Calu3 (cell line): ENCODE measurements at regions of chr3 and their contacts with region 1.

Region 1: GRCh38 chr3:62558549-62559112 is 185.3 kb upstream of the FEZF2 start:
- DNase-seq: peak; percentile 19
- H3K4me3 Mint-ChIP-seq: no peak overlapping the region
- H3K27ac Mint-ChIP-seq: no peak overlapping the region
- H3K4me1 Mint-ChIP-seq: no peaks in the 10 kb centered on the region
- H3K27me3 Mint-ChIP-seq: no peaks in the 10 kb centered on the region
- CTCF ChIP-seq: peak; percentile 33

Region 2: DNA sequence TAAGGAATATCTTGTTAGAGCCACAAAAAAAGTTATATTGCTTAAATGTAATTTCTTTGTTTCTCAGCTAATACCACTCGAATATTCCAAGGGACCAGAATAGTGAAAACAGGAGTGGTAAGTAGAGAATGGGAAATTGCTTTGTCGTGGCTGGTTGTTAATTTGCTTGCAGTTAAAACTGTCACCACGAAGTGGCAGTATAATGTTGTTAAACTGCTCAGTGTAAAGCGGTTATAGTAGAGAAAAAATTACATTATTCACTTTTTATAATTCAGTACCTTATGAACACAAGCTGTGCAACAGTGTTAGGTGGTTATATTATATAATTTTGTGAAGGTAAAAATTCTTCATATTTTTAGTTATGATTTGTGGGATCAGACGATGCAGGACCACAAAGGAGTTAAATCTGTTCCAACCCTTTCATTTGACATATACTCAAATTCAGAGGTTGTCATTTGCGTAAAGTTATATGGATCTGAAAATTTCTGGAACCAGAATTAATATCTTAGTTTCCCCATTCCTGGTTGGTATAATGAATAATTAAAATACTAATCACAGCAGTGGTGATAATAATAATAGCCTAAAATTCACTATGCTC is 357.1 kb before region 1 on chr3:
- CTCF ChIA-PET with region 1: no interaction called
- intact Hi-C with region 1: loop called (anchors 1 kb)
- DNase-seq: peak; percentile 18
- H3K4me3 Mint-ChIP-seq: no peak overlapping the region
- H3K27ac Mint-ChIP-seq: no peak overlapping the region
- H3K4me1 Mint-ChIP-seq: no peaks in the 10 kb centered on the region
- H3K27me3 Mint-ChIP-seq: no peaks in the 10 kb centered on the region
- CTCF ChIP-seq: peak; percentile 24

Region 3: DNA sequence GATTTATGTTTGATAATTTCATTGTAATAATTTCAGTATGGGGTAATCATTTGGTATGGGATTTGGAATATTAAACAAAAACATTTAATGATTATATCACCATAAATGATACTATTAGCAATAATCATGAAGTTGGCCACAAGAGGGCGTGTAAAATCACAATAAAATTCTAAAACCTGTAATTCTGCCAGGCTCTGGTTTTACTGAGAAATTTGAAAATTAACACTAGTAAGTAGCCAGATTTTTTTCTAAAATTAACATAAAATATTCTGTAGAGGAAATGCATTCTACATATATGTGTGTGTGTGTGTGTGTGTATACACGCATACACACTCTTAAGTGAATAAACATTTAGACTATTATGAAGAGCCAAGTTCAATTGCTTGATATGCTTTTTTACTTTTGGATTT is 225.8 kb before region 1 on chr3:
- CTCF ChIA-PET with region 1: interaction called, 4 read pairs
- intact Hi-C with region 1: loop called (anchors 1 kb)
- DNase-seq: peak; percentile 14
- H3K4me3 Mint-ChIP-seq: no peak overlapping the region
- H3K27ac Mint-ChIP-seq: no peak overlapping the region
- H3K4me1 Mint-ChIP-seq: no peaks in the 10 kb centered on the region
- H3K27me3 Mint-ChIP-seq: no peaks in the 10 kb centered on the region
- CTCF ChIP-seq: peak; percentile 12

Region 4: GRCh38 chr3:62481965-62482364 is 76.7 kb before region 1 on chr3:
- CTCF ChIA-PET with region 1: no interaction called
- intact Hi-C with region 1: no loop called
- DNase-seq: no peak
- H3K4me3 Mint-ChIP-seq: no peak overlapping the region
- H3K27ac Mint-ChIP-seq: no peak overlapping the region
- H3K4me1 Mint-ChIP-seq: no peaks in the 10 kb centered on the region
- H3K27me3 Mint-ChIP-seq: no peaks in the 10 kb centered on the region
- CTCF ChIP-seq: no peak

Region 5: DNA sequence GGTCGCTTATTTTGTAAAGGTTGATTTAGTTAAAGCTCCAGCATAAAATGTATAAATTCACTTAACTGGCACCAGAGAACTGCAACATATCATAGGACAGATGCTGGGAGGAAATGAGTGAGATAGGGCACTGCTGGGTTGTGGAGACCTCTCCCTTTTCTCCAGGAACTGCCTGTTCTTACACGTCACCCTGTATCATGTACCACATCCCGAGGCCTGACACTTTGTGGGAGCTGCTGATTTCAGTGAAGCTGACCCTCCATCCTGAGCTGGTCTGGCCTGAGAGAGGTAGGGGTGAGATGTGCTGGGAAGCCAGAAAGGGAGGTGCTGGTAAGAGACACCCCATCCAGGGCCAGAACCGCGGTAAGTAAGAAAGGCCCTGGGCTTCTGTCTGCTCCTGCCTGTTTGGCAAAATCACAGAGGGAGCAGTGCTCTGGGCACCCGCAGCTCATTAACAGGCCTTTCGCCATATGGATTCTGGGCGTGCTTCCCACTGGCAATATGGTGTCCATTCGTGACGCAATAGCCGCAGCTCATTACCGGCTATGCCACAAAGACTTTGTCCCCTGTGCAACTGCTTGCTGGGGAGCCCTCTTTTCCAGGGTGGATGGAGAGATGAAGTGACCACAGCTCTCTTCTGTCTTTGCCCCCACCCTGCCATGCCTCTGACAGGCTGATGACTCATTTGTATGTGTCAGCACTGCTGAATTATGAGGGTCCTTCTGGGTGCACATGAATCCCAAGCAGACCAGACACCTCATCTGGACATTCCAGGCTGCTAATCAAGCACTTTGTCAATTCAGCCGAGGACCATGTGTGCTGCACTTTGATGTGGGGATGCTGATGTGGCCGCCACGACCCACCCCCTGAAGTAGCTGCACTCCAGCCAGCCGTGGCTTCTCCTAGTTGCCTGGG is 28.8 kb after region 1 on chr3:
- CTCF ChIA-PET with region 1: no interaction called
- intact Hi-C with region 1: no loop called
- DNase-seq: no peak
- H3K4me3 Mint-ChIP-seq: no peak overlapping the region
- H3K27ac Mint-ChIP-seq: no peak overlapping the region
- H3K4me1 Mint-ChIP-seq: peaks cover 16% of the 10 kb centered on the region
- H3K27me3 Mint-ChIP-seq: no peaks in the 10 kb centered on the region
- CTCF ChIP-seq: no peak

Region 6: DNA sequence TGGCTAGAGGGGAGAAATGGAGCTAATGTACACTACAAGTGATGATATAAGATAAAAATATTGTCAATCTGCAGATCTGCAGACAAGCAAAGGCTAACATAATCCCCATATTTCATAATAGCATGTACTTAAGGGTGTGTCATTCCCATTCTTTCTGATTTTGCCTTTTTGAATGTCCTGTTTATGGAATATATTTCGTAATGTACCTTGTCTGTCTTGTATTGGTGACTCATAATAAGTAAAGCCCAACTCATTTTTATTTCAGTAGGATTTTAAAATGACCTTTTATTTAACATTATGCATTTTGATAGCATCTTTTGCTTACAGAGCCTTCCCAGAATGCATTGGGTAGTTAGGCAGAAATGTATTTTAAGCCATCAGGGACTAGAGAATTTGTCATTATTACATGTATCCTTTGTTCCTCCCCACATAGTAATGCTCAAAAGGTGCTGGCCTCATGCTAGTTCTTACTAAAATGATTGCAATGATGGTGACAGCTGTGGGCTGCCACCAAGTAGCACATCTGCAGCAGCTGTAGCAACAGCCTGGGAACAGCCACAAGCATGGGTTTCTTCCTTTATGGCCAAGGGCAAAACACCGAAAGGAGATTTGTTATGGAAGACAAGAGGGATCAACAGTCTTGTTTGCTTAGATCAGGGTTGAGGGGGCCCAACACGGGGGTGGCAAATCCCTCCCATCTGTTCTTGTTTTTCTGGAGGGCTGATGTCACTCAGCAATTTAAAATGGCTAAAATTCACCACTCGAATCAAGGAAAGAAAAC is 128.1 kb after region 1 on chr3:
- CTCF ChIA-PET with region 1: no interaction called
- intact Hi-C with region 1: no loop called
- DNase-seq: no peak
- H3K4me3 Mint-ChIP-seq: no peak overlapping the region
- H3K27ac Mint-ChIP-seq: no peak overlapping the region
- H3K4me1 Mint-ChIP-seq: no peaks in the 10 kb centered on the region
- H3K27me3 Mint-ChIP-seq: peaks cover 37% of the 10 kb centered on the region
- CTCF ChIP-seq: no peak